Activated T-helper 1 cell treated with anti-CD3 and anti-CD28 coated beads, Interleukin-12 subunit alpha, Interleukin-12 subunit beta, Interleukin-2, Interleukin-4 antibody, amounts not matched to agents 30 ng/mL and 10 ng/mL and 1 ng/mL, durations not matched to agents 14 hours and 24 hours and 36 hours (primary cell): ENCODE measurements at regions of chr19 and their contacts with region 1.

Region 1: DNA sequence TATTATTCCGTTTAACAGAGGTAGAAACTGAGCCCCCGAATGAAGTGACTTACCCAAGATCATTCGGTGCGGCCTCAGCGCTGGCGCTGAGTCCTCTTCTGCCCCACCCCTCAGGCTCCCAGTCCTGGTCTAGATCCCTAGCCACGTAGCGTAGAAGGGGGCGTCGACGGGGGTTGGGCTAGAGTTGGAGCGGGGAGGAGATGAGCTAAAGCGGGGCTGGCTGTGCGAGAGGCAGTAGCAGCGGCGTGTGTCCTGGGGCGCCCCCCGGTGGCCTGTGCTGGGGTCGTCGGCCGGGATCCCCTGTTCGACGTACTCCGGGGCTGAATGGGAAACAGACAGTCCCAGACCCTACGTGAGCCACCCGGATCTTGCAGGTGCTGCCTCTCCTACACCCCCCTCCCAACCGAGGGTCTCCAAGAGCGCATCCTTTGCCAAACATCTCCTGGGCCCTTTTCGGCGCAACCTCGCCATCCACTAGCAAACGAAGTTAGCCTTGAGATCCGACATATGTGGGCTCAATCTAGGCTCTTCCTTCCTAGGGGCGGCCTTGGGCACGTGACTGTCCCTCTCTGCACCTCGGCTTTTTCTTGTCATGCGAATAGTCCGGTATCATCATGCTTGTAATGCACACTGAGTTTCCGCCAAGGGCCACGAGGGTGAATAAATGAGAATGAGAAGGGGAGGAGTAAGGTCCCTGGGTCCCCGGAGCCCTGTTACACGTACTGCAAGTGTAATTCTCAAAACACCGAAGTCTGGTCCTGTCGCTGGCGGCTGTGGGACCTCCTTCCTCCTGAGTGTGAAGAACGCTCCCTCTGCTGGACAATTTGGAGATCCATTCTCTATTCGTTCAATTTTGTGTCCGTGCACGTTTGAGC is 47.7 kb downstream of the CYP4F22 start:
- DNase-seq: peak; percentile 92
- H3K4me3 Mint-ChIP-seq: peak overlapping the region; percentile 82
- H3K27ac Mint-ChIP-seq: peak overlapping the region; percentile 83
- H3K4me1 Mint-ChIP-seq: peaks cover 25% of the 10 kb centered on the region
- H3K27me3 Mint-ChIP-seq: peaks cover 9% of the 10 kb centered on the region

Region 2: DNA sequence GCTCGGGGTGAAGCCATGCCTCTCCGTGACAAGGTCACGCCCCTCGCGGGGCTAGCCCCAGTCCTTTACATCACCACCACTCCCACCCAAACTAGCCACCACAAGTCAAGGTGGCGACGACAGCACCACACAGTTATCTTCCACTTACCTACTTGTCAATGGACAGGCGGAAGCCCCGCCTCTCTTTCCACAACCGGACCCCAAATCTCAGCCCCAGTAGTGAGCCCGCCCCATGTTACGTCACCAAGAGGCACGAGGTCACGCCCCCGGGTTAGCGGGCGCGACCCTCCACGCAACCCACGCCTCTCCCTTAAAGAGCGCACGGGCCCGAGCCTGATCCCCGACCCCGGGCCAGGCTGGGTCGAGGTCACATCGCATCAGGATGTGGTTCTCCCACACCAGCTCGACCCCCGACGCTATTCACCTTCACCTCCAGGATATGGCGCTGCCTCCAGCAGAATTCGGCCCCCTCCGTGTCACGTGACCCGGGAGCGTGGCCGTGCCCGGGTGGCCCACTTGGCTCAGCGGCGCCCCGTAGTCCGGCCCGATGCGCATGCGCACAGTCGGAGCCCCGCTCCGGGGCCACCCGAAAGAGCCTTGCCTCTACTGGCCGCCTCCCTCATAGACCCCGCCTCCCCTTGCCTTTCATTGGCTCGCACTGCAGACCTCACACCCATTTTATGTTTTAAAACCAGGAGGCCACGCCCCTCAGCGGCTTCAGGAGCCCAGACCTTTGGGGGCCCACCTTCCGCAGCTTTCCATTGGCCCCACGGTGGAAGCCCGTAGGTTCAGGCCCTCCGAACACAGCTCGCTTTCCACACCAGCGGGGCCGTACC is 430.5 kb before region 1 on chr19:
- intact Hi-C with region 1: loop called (anchors 1 kb)
- DNase-seq: peak; percentile 97
- H3K4me3 Mint-ChIP-seq: peak overlapping the region; percentile 91
- H3K27ac Mint-ChIP-seq: peak overlapping the region; percentile 98
- H3K4me1 Mint-ChIP-seq: peaks cover 37% of the 10 kb centered on the region
- H3K27me3 Mint-ChIP-seq: no peaks in the 10 kb centered on the region

Region 3: DNA sequence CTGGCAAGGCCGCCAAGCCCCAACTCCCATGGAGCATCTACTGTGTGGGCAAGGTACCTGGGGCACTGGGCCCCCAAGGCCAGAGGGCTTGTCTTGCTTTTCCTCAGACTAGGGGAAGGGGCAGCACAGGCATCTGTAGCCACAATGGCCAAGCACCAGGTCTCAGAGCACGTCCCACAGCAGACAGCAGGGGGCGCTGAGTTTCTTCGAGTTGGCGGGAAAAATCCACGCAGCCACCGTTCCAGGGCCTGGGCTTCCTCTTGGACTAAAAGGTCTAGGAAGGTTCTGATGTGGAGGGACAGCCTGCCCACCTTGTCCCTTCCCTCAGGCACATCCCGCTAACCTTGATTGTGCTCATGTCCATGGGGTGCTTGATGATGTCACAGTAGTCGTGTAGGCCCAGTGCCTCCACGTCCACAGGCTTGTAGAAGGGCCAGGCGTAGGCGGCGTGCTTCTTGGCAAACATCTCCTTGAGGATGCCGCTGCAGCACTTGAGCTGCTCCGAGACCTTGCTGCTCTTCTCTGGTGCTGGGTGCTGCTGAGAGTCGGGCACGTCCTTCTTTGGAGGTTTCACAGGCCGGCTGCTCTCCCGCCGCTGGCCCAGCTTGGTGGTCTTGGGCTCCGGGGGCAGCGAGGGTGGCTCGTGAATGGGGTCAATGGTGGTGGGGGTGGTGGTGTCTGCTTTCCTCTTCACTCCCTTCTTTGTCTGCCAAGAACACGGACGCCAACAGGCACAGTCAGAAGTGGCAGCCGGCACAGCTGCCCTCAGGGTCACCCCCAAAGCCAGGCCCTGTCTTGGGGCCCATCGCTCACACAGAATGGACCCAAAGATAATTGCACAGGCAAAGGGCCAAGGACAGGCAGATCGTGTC is 291.7 kb before region 1 on chr19:
- intact Hi-C with region 1: loop called (anchors 1 kb)
- DNase-seq: peak; percentile 42
- H3K4me3 Mint-ChIP-seq: no peak overlapping the region
- H3K27ac Mint-ChIP-seq: no peak overlapping the region
- H3K4me1 Mint-ChIP-seq: peaks cover 14% of the 10 kb centered on the region
- H3K27me3 Mint-ChIP-seq: no peaks in the 10 kb centered on the region

Region 4: GRCh38 chr19:15379083-15379995 is 176.7 kb before region 1 on chr19 and contains the start of gene AKAP8:
- intact Hi-C with region 1: loop called (anchors 1 kb)
- DNase-seq: peak; percentile 98
- H3K4me3 Mint-ChIP-seq: peak within 1 kb of the TSS; percentile 98
- H3K27ac Mint-ChIP-seq: peak within 1 kb of the TSS; percentile 100
- H3K4me1 Mint-ChIP-seq: peaks cover 35% of the 10 kb centered on the region
- H3K27me3 Mint-ChIP-seq: no peaks in the 10 kb centered on the region
- total RNA-seq, gene AKAP8: 52.7 and 57.5 TPM in 2 replicates

Region 5: GRCh38 chr19:15432629-15433518 is 123.1 kb before region 1 on chr19:
- intact Hi-C with region 1: loop called (anchors 1 kb)
- DNase-seq: peak; percentile 94
- H3K4me3 Mint-ChIP-seq: peak overlapping the region; percentile 91
- H3K27ac Mint-ChIP-seq: peak overlapping the region; percentile 88
- H3K4me1 Mint-ChIP-seq: peaks cover 31% of the 10 kb centered on the region
- H3K27me3 Mint-ChIP-seq: no peaks in the 10 kb centered on the region

Region 6: DNA sequence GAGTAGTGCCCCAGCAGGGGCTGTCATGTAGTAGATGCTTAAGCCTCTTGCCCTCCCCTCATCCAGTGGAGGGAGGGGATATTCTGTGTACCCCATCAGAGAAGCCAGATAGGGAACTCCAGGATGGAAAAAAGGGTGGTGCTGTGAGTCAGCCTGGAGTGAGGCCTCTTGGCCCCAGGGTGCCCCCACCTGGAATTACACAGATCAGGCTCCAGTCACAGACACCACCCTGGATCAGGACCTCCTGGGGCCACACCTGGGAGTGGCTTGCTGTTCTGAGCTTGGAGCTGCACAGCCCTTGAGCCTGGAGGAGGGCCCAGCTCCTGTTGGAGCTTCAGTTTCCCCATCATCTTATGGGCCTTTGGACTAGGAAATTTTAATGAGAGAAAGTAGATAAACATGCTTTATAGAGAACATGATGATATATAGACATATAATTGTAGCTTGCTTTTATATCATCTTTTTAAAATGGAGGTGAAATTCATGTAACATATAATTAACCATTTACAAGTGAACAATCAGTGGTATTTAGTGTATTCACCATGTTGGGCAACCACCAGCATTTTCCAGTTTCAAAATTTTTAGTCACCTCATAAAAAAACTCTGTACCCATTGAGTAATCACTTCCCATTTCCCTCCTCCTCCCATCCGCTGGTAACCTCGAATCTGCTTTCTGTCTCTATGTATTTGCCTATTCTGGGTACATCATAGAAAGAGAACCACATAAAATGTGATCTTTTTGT is 23.0 kb before region 1 on chr19:
- intact Hi-C with region 1: loop called (anchors 2 kb)
- DNase-seq: no peak
- H3K4me3 Mint-ChIP-seq: no peak overlapping the region
- H3K27ac Mint-ChIP-seq: peak overlapping the region; percentile 8
- H3K4me1 Mint-ChIP-seq: peaks cover 29% of the 10 kb centered on the region
- H3K27me3 Mint-ChIP-seq: peaks cover 7% of the 10 kb centered on the region